Dorsolateral prefrontal cortex (tissue), 120 donors: ENCODE measurements at regions of chr15 and their contacts with region 1.

Region 1: GRCh38 chr15:69160141-69160993 is at the start of gene GLCE:
- DNase-seq: peak; percentile 93 to 99 (median 97)
- H3K4me3 ChIP-seq: peak within 1 kb of the TSS; percentile 57 to 96 (median 85)
- H3K27ac ChIP-seq: peak within 1 kb of the TSS in 58 of 59 donors; percentile 55 to 98 (median 93)
- H3K27me3 ChIP-seq: no peaks in the 10 kb centered on the region
- CTCF ChIP-seq: peak in 27 of 56 donors; percentile 8 to 51 (median 28)
- total RNA-seq, gene GLCE: 10.7 to 33.2 (median 23.6) TPM

Region 2: DNA sequence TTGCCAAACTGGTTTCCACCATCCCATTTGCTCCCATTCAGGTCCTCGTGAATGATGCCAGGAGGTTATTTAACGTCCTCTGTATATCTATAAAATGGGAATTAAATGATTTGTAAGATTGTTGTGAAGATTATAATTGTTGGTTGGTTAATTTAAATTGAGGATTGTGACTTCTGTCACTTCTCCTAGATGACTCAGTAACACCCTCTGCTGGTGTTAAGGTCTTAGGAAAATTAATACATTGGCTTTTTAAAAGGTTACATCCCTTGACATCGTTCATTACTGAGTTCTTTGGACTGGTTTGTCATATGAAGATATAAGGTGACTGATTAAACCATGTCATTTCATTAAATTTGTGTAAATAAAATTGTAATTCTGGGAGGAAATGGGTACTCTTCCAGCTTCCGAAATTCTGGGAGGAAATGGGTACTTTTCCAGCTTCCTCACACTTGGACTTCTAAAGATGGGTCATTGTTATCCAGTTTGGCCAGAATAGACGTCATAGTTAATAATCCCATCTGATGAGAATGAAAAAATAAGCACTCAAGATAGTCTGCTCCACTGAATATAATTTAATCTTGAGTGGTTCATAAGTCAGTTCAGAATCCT is 105.1 kb after region 1 on chr15:
- intact Hi-C with region 1: loop called in 1 of 2 experiments (anchors 5 kb)
- DNase-seq: no peak
- H3K4me3 ChIP-seq: no peak overlapping the region
- H3K27ac ChIP-seq: no peak overlapping the region
- H3K27me3 ChIP-seq: no peaks in the 10 kb centered on the region
- CTCF ChIP-seq: peak in 55 of 56 donors; percentile 33 to 80 (median 66)

Region 3: GRCh38 chr15:69452692-69453521 is 292.5 kb after region 1 on chr15 and contains the start of gene RPLP1:
- intact Hi-C with region 1: loop called in 1 of 2 experiments (anchors 2 kb)
- DNase-seq: peak; percentile 96 to 98 (median 97)
- H3K4me3 ChIP-seq: peak within 1 kb of the TSS; percentile 64 to 100 (median 93)
- H3K27ac ChIP-seq: peak within 1 kb of the TSS; percentile 33 to 94 (median 86)
- H3K27me3 ChIP-seq: no peaks in the 10 kb centered on the region
- CTCF ChIP-seq: peak in 18 of 56 donors; percentile 6 to 47 (median 28)
- total RNA-seq, gene RPLP1: 273 to 656 (median 397) TPM